Psoas muscle (tissue), 8 donors: ENCODE measurements at regions of chr14 and their contacts with region 1.

Region 1: GRCh38 chr14:70714055-70714621 is 72.4 kb downstream of the TTC9 start:
- DNase-seq: no peak
- ATAC-seq: peak in 2 of 4 donors; percentile 49 to 61
- H3K4me3 ChIP-seq: no peak overlapping the region
- H3K27ac ChIP-seq: no peak overlapping the region
- H3K4me1 ChIP-seq: no peaks in the 10 kb centered on the region
- H3K27me3 ChIP-seq: peaks cover 0 to 2% (median 0%) of the 10 kb centered on the region in 3 donors
- CTCF ChIP-seq: peak; percentile 73

Region 2: GRCh38 chr14:70600382-70601157 is 113.6 kb before region 1 on chr14 and contains the start of gene MED6:
- intact Hi-C with region 1: loop called in 1 of 2 experiments (anchors 5 kb)
- DNase-seq: peak; percentile 93 to 96
- ATAC-seq: peak; percentile 99 to 100 (median 100)
- H3K4me3 ChIP-seq: peak within 1 kb of the TSS; percentile 80
- H3K27ac ChIP-seq: peak within 1 kb of the TSS; percentile 77
- H3K4me1 ChIP-seq: peaks cover 17% of the 10 kb centered on the region
- H3K27me3 ChIP-seq: peaks cover 0 to 5% (median 0%) of the 10 kb centered on the region in 3 donors
- CTCF ChIP-seq: no peak
- total RNA-seq, gene MED6: 22.5 to 30.5 (median 25.7) TPM

Region 3: DNA sequence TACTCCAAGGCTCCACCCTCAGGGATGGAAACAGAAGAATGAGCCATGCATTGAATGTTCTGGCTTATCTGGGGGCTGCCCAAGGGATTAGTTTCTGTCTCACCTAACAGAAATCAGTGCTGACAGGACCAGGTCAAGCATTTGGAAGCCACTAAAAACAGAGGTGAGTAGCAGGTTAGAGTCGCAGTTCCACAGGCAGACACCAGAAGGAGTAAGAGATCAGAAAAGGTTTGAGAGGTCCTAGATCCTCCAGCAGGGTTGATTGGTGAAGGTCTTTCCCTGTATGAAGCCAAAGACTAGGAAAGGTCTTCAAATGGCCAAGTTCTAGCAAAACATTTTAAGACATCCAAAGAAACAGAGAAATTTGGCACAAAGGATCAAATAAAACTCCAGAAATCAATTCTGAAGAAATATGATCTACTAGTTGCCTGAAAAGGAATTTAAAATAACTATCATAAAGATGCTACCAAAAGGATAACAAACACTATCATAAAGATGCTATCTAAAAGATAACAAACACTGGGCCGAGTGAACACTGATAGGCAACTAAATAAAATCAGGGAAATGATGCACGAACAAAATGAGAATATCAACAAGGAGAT is 91.9 kb before region 1 on chr14:
- intact Hi-C with region 1: loop called (anchors 5 kb)
- DNase-seq: no peak
- ATAC-seq: peak in 3 of 4 donors; percentile 59 to 65 (median 64)
- H3K4me3 ChIP-seq: no peak overlapping the region
- H3K27ac ChIP-seq: no peak overlapping the region
- H3K4me1 ChIP-seq: no peaks in the 10 kb centered on the region
- H3K27me3 ChIP-seq: no peaks in the 10 kb centered on the region
- CTCF ChIP-seq: peak; percentile 58

Region 4: GRCh38 chr14:70635971-70636595 is 78.1 kb before region 1 on chr14:
- intact Hi-C with region 1: loop called in 1 of 2 experiments (anchors 5 kb)
- DNase-seq: no peak
- ATAC-seq: no peak
- H3K4me3 ChIP-seq: no peak overlapping the region
- H3K27ac ChIP-seq: no peak overlapping the region
- H3K4me1 ChIP-seq: peaks cover 3% of the 10 kb centered on the region
- H3K27me3 ChIP-seq: peaks cover 0 to 29% (median 0%) of the 10 kb centered on the region in 3 donors
- CTCF ChIP-seq: no peak

Region 5: GRCh38 chr14:70816525-70816924 is 102.4 kb after region 1 on chr14:
- intact Hi-C with region 1: loop called in 1 of 2 experiments (anchors 2 kb)
- DNase-seq: no peak
- ATAC-seq: no peak
- H3K4me3 ChIP-seq: no peak overlapping the region
- H3K27ac ChIP-seq: no peak overlapping the region
- H3K4me1 ChIP-seq: no peaks in the 10 kb centered on the region
- H3K27me3 ChIP-seq: peaks cover 0 to 12% (median 0%) of the 10 kb centered on the region in 3 donors
- CTCF ChIP-seq: no peak

Region 6: DNA sequence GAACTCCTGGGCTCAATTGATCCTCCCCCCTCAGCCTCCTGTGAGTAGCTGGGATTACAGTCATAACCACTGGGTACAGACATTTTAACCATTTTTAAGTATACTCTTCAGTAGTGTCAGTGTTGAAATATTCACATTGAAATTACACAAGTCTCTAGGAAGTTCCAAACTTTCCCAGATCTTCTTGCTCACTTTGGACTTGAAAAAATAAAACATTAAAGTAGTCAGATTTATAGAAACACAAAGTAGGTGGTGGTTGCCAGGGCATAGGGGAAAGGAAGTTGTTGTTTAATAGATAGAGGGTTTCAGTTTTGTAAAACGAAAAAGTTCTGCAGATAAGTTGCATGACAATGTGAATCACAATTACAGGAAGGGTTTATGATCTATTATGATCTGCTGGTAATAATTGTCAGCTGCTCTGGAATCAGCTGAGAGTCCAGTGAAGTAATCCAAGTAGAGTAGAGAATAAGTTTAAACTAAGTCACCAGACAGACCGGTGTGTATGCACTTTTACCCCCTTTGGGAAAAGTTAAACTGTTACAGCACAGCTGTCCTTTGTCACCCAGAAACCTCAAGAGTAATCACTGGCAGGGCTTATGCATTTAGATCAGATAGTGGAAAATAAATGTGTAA is 220.5 kb after region 1 on chr14:
- intact Hi-C with region 1: no loop called
- DNase-seq: no peak
- ATAC-seq: peak; percentile 75 to 95 (median 91)
- H3K4me3 ChIP-seq: no peak overlapping the region
- H3K27ac ChIP-seq: peak overlapping the region; percentile 69
- H3K4me1 ChIP-seq: peaks cover 26% of the 10 kb centered on the region
- H3K27me3 ChIP-seq: no peaks in the 10 kb centered on the region
- CTCF ChIP-seq: no peak